CD8-positive, alpha-beta memory T cell (primary cell): ENCODE measurements at regions of chr5 and their contacts with region 1.

Region 1: DNA sequence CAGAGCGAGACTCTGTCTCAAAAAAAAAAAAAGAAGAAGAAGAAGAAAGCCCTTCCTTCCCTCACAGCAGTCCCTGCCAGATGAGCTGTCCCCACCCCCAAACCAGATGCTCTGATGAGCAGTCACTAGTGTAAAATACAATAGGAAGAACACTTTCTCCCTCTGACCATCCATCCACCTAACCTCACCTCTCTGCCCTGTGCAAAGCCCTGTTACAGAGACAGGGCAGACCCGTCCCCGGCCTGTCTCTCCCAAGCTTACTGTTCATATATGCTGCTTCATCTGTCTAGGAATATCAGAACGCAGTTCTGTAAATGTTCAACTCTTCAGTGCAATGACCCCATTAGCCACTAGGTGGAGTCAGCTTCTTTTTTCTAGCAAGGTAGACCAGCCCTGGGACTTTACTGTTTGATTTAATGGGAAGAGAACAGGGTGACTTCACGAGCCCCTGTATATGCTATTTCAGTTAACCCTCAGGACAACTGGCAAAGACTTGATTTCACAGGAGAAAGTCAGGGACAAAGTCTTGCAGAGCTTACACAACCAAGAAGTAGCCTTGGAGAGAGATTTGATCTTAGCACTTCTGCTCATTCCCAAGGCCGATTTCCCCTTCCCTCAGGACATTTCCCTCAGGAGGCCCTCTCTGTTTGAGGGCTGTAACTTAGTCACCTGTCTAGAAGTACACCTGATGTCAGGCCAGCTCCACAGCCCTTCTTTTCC is 14.9 kb upstream of the FGFR4 start:
- DNase-seq: peak; percentile 31 to 60 (median 52)
- H3K4me3 ChIP-seq: no peak overlapping the region
- H3K4me3 Mint-ChIP-seq: peak overlapping the region in 1 of 7 donors; percentile 11
- H3K27ac ChIP-seq: no peak overlapping the region
- H3K27ac Mint-ChIP-seq: peak overlapping the region in 1 of 8 donors; percentile 62
- H3K4me1 ChIP-seq: no peaks in the 10 kb centered on the region
- H3K4me1 Mint-ChIP-seq: peaks cover 3 to 5% (median 5%) of the 10 kb centered on the region in 3 donors
- H3K27me3 ChIP-seq: no peaks in the 10 kb centered on the region
- H3K27me3 Mint-ChIP-seq: no peaks in the 10 kb centered on the region

Region 2: GRCh38 chr5:177035976-177036375 is 35.9 kb before region 1 on chr5:
- CTCF ChIA-PET with region 1: interaction called, 3 read pairs
- POLR2A ChIA-PET with region 1: interaction called, 21 read pairs
- DNase-seq: no peak
- H3K4me3 ChIP-seq: no peak overlapping the region
- H3K4me3 Mint-ChIP-seq: peak overlapping the region in 1 of 7 donors; percentile 8
- H3K27ac ChIP-seq: no peak overlapping the region
- H3K27ac Mint-ChIP-seq: peak overlapping the region in 1 of 8 donors; percentile 82
- H3K4me1 ChIP-seq: no peaks in the 10 kb centered on the region
- H3K4me1 Mint-ChIP-seq: peaks cover 22 to 28% (median 24%) of the 10 kb centered on the region in 3 donors
- H3K27me3 ChIP-seq: no peaks in the 10 kb centered on the region
- H3K27me3 Mint-ChIP-seq: no peaks in the 10 kb centered on the region

Region 3: GRCh38 chr5:177086924-177087706 is 15.3 kb after region 1 on chr5:
- CTCF ChIA-PET with region 1: interaction called, 26 read pairs
- POLR2A ChIA-PET with region 1: no interaction called
- DNase-seq: peak; percentile 59 to 76 (median 71)
- H3K4me3 ChIP-seq: peak overlapping the region; percentile 49
- H3K4me3 Mint-ChIP-seq: peak overlapping the region in 6 of 7 donors; percentile 6 to 83 (median 26)
- H3K27ac ChIP-seq: no peak overlapping the region
- H3K27ac Mint-ChIP-seq: no peak overlapping the region
- H3K4me1 ChIP-seq: peaks cover 8% of the 10 kb centered on the region
- H3K4me1 Mint-ChIP-seq: peaks cover 9 to 13% (median 11%) of the 10 kb centered on the region in 3 donors
- H3K27me3 ChIP-seq: no peaks in the 10 kb centered on the region
- H3K27me3 Mint-ChIP-seq: peaks cover 3 to 13% of the 10 kb centered on the region in 2 donors